ENCODE measurements at regions of chr19 and their contacts with region 1.

Region 1: DNA sequence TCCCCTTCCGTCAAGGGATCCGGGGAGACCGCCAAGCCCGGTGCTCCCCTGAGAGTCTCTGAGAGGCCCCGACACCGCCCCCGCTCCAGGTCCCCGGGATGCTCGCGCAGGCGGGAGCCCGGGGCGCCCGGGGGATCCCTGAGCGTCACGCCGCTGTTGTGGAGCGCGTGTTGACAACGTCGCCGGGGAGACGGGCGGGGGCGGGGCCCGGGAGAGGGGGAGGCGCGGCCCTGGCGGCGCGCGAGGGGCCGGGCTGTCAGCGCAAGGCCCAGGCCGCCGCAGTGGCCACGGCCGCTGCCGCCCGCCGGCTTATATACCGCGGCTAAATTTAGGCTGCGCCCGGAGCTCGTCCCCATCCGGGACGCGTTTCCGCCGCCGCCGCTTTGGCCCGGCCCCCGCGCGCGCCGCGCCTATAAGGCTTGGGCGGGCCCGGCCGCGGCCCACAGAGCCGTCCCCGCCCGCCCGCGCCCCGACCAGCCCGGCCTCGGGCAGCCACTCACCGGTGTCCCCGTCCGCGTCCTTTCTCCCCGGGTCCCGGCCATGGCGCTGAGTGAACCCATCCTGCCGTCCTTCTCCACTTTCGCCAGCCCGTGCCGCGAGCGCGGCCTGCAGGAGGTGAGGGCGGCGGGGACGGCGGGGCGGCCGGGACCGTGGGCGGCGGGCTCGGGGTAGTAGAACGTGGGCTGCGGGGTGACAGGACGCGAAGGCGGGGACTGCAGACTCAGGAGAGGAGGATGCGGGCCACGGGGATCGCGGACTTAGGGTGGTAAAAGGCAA is at the start of gene KLF2:
- DNase-seq: peak; percentile 93 to 97
- H3K4me3 ChIP-seq: peak within 1 kb of the TSS; percentile 77 to 94 (median 84)
- H3K27ac ChIP-seq: peak within 1 kb of the TSS; percentile 91 to 98 (median 97)
- H3K4me1 ChIP-seq: peaks cover 28 to 57% (median 43%) of the 10 kb centered on the region in 4 donors
- H3K27me3 ChIP-seq: no peaks in the 10 kb centered on the region
- CTCF ChIP-seq: no peak
- EP300 ChIP-seq: no peak
- POLR2A ChIP-seq: no peak
- total RNA-seq, gene KLF2: 31.0 to 107 (median 72.3) TPM

Region 2: DNA sequence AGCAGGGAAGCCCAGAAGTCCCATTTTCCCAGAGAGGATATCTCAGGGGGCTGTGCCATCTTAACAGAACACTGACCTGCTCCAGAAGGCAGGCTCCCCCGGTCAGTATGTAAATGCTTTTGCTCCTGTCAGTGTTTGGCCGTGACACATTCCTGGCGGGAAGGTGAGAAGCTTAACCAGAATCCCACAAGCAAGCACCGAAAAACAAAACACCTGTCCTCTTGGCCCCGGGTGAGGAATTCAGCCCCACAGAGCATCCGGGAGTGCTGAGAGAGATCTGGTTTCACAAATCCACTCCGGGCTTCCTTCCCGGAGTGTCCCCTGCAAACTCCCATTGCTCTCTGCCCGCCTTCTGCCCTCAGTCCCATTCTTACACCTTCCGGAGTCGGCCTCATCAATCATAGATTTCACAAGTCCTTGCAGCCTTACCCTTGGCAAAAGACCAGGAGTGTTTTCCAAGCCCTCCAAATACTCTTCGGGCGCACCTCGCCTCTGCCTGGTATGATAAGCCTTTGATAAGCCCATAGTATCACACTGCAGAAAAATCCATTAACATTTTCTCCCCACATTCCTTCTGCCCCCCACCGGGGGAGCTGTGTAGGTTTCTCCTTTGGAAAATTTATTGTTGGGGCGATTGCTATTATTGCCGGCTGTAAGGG is 236.1 kb before region 1 on chr19:
- intact Hi-C with region 1: no loop called
- DNase-seq: peak; percentile 52 to 88
- H3K4me3 ChIP-seq: no peak overlapping the region
- H3K27ac ChIP-seq: peak overlapping the region in 4 of 5 donors; percentile 61 to 100 (median 76)
- H3K4me1 ChIP-seq: peaks cover 27 to 86% (median 43%) of the 10 kb centered on the region in 4 donors
- H3K27me3 ChIP-seq: no peaks in the 10 kb centered on the region
- CTCF ChIP-seq: peak in 1 of 7 experiments; percentile 8
- EP300 ChIP-seq: no peak
- POLR2A ChIP-seq: no peak

Region 3: GRCh38 chr19:16272945-16273344 is 51.6 kb before region 1 on chr19:
- intact Hi-C with region 1: loop called (anchors 10 kb)
- DNase-seq: peak in 1 of 2 donors; percentile 69
- H3K4me3 ChIP-seq: no peak overlapping the region
- H3K27ac ChIP-seq: peak overlapping the region; percentile 14 to 79 (median 70)
- H3K4me1 ChIP-seq: peaks cover 7 to 21% (median 12%) of the 10 kb centered on the region in 4 donors
- H3K27me3 ChIP-seq: no peaks in the 10 kb centered on the region
- CTCF ChIP-seq: no peak
- EP300 ChIP-seq: no peak
- POLR2A ChIP-seq: no peak